ENCODE measurements at regions of chrX and their contacts with region 1.

Region 1: DNA sequence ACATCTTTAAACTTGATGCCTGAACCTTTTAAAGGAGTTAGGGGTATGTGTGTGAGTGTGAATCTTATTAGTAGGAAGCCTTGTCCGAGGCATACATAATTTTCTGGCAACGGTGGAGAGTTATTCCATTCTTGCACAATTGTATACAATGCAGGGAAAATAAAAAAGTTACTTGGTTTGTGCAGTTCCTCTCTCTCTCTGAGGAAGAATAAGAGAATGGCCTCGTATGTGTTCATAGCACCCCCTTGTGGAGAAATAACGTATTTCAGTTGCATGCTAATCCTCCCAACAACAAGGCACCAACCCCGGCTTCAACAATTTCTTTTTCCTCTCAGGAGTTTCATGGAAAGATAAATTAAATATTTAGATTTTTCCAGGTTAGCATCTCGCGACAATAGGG is 33.7 kb upstream of the FGF13 start:
- DNase-seq: peak in 5 of 7 donors; percentile 19 to 41 (median 30)
- H3K4me3 ChIP-seq: no peak overlapping the region
- H3K27ac ChIP-seq: no peak overlapping the region
- H3K4me1 ChIP-seq: no peaks in the 10 kb centered on the region
- H3K27me3 ChIP-seq: peaks cover 26% of the 10 kb centered on the region
- CTCF ChIP-seq: peak; percentile 31 to 86 (median 64)
- POLR2A ChIP-seq: no peak

Region 2: GRCh38 chrX:138128027-138128671 is 617.0 kb before region 1 on chrX:
- intact Hi-C with region 1: loop called in 1 of 2 experiments (anchors 5 kb)
- DNase-seq: peak in 4 of 7 donors; percentile 7 to 26 (median 12)
- H3K4me3 ChIP-seq: no peak overlapping the region
- H3K27ac ChIP-seq: no peak overlapping the region
- H3K4me1 ChIP-seq: no peaks in the 10 kb centered on the region
- H3K27me3 ChIP-seq: peaks cover 23% of the 10 kb centered on the region
- CTCF ChIP-seq: peak; percentile 16 to 64 (median 46)
- POLR2A ChIP-seq: no peak

Region 3: DNA sequence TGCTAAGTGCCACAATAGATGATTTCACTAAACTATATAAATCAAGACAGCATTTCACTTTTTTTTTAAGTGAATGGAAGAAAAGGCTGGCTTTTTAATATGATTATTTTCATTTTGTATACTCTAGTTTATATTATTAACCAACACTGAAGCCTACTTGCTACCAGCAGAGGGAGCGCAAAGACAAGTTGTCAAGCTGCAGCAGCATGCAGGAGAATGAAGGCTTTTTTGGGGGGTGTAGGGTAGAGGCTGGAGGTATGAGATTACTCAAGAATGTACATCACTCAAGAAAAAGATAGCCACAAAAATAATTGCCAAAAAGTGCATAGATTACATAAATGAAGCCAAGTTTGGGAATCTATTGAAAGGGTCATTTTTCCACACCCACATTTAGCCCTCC is 553.2 kb before region 1 on chrX:
- intact Hi-C with region 1: loop called in 1 of 2 experiments (anchors 10 kb)
- DNase-seq: peak in 5 of 7 donors; percentile 1 to 46 (median 20)
- H3K4me3 ChIP-seq: no peak overlapping the region
- H3K27ac ChIP-seq: no peak overlapping the region
- H3K4me1 ChIP-seq: no peaks in the 10 kb centered on the region
- H3K27me3 ChIP-seq: peaks cover 4% of the 10 kb centered on the region
- CTCF ChIP-seq: peak in 2 of 6 experiments; percentile 21 to 43
- POLR2A ChIP-seq: no peak